CD4-positive, alpha-beta memory T cell (primary cell): ENCODE measurements at regions of chr11 and their contacts with region 1.

Region 1: DNA sequence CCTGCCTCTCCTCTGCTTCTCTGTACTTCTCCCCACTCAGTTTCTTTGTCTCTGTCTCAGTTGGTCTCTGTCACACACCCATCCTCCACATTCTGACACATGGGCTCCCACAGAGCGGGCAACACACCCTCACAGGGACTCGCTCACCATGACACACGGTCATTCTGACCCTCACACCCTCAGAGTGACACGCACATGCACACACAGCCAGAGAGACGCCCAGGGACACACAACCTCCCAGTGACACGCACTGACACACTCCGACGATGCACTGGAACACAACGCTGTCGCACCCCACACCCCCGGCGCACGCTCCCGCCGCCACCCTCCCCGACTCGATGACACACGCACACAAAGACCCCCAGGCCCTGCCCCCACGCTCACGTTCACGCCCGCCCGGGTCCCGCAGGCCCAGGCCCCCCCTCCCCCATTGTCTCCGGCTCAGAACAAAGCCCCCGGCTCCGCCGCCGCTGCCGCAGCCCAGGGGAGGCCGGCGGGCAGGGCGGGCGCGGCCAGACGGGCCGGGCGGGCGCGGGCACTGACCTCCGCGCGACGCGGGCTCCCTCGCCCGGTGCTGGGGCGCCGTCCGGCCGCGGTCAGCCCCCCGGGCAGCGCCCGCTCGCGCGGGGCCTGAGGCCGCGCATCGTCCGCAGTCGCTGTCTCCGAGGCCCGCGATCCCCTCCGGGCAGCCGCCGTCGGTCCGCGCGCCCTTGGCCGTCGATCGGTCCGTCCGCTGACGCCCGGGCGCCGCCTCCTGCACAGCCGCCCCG is 404 bp downstream of the DCHS1 start:
- DNase-seq: peak in 1 of 5 donors; percentile 50
- H3K4me3 ChIP-seq: peak overlapping the region in 1 of 2 donors; percentile 3
- H3K4me3 Mint-ChIP-seq: no peak overlapping the region
- H3K27ac ChIP-seq: no peak overlapping the region
- H3K27ac Mint-ChIP-seq: no peak overlapping the region
- H3K4me1 ChIP-seq: peaks cover 25% of the 10 kb centered on the region
- H3K4me1 Mint-ChIP-seq: peaks cover 0 to 8% (median 1%) of the 10 kb centered on the region in 4 donors
- H3K27me3 ChIP-seq: peaks cover 7% of the 10 kb centered on the region
- H3K27me3 Mint-ChIP-seq: peaks cover 0 to 2% of the 10 kb centered on the region in 2 donors

Region 2: DNA sequence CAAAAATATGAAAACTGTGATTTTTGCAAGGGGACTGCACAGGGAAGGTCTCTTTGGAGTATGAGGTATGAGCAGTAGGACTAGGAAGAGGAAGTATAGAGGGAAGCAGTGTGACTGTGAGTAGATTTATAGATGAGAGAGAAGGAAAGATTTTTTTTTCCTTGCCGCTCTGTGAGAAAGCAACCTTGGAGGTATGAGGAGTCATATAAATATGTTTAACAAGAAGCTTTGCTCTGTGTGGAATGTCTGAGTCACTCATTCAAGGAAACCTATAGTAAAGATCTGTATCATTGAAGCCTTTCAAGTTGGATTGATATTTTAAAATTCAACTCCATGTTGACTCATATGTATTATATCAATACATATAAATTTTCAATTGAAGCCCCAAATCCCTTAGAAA is 132.0 kb before region 1 on chr11:
- CTCF ChIA-PET with region 1: no interaction called
- POLR2A ChIA-PET with region 1: no interaction called
- intact Hi-C with region 1: no loop called
- DNase-seq: no peak
- H3K4me3 ChIP-seq: no peak overlapping the region
- H3K4me3 Mint-ChIP-seq: no peak overlapping the region
- H3K27ac ChIP-seq: no peak overlapping the region
- H3K27ac Mint-ChIP-seq: peak overlapping the region in 1 of 7 donors; percentile 74
- H3K4me1 ChIP-seq: peaks cover 14% of the 10 kb centered on the region
- H3K4me1 Mint-ChIP-seq: peaks cover 11 to 19% (median 14%) of the 10 kb centered on the region in 4 donors
- H3K27me3 ChIP-seq: no peaks in the 10 kb centered on the region
- H3K27me3 Mint-ChIP-seq: no peaks in the 10 kb centered on the region

Region 3: DNA sequence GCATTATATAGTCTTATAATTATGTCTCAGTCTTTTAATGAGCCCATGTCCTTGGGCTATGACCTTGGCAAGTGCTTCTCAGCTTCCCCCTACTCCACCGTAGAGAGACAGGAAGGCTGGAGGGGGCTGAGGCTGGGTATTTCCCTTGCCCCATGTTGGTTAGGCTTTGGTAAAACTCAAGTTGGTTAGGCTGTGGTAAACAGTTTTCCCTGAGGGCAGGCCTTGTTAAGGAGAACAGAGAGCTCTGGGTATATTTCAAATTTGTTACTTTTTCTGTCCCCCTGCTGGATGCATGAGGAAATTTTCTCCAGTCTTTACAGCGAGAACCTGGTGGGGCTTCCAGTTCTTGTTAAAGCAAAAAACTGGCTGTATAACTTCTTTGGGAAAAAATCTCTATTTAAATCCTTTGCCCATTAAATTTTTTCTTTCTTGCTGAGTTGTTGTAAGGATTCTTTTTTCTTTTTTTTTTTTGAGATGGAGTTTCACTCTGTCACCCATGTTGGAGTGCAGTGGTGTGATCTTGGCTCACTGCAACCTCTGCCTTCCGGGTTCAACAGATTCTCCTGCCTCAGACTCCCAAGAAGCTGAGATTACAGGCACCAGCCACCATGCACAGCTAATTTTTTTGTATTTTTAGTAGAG is 12.6 kb after region 1 on chr11:
- CTCF ChIA-PET with region 1: interaction called, 17 read pairs
- POLR2A ChIA-PET with region 1: interaction called, 12 read pairs
- intact Hi-C with region 1: no loop called
- DNase-seq: peak; percentile 48 to 78 (median 54)
- H3K4me3 ChIP-seq: no peak overlapping the region
- H3K4me3 Mint-ChIP-seq: peak overlapping the region in 7 of 8 donors; percentile 5 to 35 (median 16)
- H3K27ac ChIP-seq: no peak overlapping the region
- H3K27ac Mint-ChIP-seq: peak overlapping the region; percentile 11 to 88 (median 74)
- H3K4me1 ChIP-seq: peaks cover 59% of the 10 kb centered on the region
- H3K4me1 Mint-ChIP-seq: peaks cover 45 to 87% (median 54%) of the 10 kb centered on the region in 4 donors
- H3K27me3 ChIP-seq: no peaks in the 10 kb centered on the region
- H3K27me3 Mint-ChIP-seq: no peaks in the 10 kb centered on the region

Region 4: DNA sequence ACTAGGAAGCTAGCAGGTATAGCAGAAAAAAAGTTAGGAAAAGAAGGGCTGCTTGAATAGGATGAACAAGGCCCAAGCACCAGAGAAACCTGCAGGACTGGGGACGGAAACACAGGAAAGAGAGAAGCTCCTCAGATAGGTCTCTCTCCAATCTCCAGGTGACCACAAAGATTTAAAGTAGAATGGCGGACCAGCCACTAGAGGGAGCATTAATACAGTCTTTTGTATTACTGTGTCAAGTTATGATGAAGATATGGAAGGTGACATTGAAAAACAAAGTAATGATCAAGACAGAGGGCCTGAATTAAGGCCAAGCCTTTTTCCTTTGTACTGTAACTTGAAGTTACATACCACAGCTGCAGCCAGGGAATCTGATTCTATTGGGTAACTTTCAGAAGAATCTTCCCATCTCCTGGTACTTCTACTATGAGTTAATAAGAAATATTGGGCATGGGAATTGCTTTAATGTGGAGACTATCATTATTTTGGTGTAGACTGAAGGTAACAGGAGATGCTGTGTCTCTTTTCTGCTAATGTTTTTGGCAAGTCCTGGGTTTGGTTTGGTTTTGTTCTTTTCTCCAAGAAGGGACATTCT is 82.8 kb after region 1 on chr11:
- CTCF ChIA-PET with region 1: no interaction called
- POLR2A ChIA-PET with region 1: no interaction called
- intact Hi-C with region 1: no loop called
- DNase-seq: peak; percentile 73 to 82 (median 75)
- H3K4me3 ChIP-seq: no peak overlapping the region
- H3K4me3 Mint-ChIP-seq: peak overlapping the region; percentile 23 to 77 (median 38)
- H3K27ac ChIP-seq: peak overlapping the region; percentile 38
- H3K27ac Mint-ChIP-seq: peak overlapping the region; percentile 60 to 89 (median 75)
- H3K4me1 ChIP-seq: peaks cover 88% of the 10 kb centered on the region
- H3K4me1 Mint-ChIP-seq: peaks cover 75 to 91% (median 83%) of the 10 kb centered on the region in 4 donors
- H3K27me3 ChIP-seq: no peaks in the 10 kb centered on the region
- H3K27me3 Mint-ChIP-seq: no peaks in the 10 kb centered on the region